G401 (cell line): ENCODE measurements at regions of chr4 and their contacts with region 1.

Region 1: DNA sequence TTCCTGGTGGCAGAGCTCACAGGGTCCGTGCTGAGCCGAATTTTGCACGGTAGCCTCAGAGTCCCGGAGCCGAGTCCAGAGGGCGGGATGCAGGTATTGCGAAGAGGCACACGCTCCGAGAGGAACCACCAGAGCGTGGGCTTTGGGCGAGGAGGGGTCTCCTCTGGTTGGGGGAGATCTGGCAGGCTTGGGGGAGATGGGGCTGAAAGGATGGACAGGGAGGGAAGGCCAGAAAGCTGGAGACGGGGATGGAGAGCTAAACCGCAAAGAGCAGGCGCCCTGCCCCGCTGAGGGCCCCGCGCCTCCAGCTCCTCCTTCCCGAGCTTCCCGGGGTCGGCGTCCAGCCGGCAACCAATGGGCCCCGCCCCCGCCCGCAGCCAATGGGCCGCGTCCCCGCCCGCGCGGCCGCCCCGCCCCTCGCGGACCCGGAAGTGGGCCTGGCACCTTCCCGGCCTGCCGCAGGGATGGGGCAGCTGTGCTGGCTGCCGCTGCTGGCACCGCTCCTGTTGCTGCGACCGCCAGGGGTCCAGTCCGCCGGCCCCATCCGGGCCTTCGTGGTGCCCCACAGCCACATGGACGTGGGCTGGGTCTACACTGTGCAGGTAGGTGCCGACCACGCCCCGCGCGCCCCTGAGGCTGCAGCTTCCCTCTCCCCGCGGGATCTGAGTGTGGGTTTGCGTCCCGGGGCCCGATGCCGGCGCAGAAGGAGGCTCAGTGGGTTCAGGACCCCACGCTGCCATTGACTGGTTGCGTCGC is at the start of gene MAN2B2:
- DNase-seq: peak; percentile 63
- total RNA-seq, gene MAN2B2: 6.9 and 10.1 TPM in 2 replicates

Region 2: GRCh38 chr4:6362896-6363295 is 212.0 kb before region 1 on chr4:
- in situ Hi-C with region 1: no loop called
- DNase-seq: no peak

Region 3: GRCh38 chr4:6493658-6494304 is 81.1 kb before region 1 on chr4:
- in situ Hi-C with region 1: no loop called
- DNase-seq: peak; percentile 33

Region 4: DNA sequence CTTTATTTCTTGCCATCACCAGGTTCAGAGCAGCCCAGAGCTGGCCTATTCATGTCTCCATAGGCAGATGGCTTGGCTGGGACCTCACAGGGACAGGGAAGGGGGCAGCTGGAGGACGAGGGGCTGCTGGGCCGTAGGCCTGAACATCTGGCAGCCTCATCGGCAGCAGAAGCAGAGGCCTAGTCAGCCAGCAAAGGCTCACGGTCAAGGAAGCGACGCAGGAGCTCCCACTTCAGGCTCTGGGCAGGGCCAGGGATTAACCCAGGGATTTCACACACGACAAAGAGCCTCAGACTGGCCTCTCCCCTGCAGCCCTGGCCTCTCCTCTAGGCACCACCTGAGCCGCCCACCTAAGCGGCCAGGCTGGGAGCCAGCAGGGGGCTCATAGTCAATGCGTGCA is 45.9 kb before region 1 on chr4:
- in situ Hi-C with region 1: no loop called
- DNase-seq: no peak

Region 5: DNA sequence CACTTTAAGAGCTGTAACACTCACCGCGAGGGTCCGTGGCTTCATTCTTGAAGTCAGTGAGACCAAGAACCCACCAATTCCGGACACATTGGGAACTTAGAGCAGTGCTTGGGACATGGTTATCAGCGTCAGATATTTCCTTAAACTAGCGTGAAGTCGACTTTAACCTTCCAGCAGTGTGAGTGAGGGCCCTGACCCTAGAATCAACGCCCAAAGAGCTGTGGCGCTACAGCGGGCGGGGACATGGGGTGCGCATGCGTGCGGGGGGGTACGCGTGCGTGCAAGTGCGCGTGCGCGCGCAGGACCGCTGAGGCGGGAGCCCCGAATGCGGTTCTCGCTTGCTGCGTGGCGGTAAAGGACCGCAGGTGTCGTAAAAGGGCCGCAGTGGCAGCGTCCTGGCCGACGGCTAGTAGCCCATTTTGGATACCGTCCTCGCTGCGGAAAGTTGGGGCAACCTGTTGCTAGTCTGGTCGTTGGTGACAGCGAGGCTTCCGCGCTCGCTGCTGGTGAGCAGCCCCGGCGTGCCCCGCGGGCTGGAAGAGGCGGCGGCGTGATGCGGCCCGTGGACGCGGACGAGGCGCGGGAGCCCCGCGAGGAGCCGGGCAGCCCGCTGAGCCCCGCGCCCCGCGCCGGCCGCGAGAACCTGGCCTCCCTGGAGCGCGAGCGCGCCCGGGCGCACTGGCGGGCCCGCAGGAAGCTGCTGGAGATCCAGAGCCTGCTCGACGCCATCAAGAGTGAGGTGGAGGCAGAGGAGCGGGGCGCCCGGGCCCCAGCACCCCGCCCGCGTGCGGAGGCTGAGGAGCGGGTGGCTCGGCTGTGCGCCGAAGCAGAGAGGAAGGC is 99.0 kb after region 1 on chr4:
- in situ Hi-C with region 1: loop called (anchors 25 kb)
- DNase-seq: peak; percentile 94